ENCODE measurements at regions of chr15 and their contacts with region 1.

Region 1: GRCh38 chr15:52179278-52180195 is 11.7 kb downstream of the GNB5 start:
- DNase-seq: peak; percentile 93
- ATAC-seq: peak; percentile 87
- H3K4me3 Mint-ChIP-seq: peak overlapping the region; percentile 92
- H3K27ac Mint-ChIP-seq: peak overlapping the region; percentile 96
- H3K4me1 Mint-ChIP-seq: peaks cover 35% of the 10 kb centered on the region
- H3K27me3 Mint-ChIP-seq: no peaks in the 10 kb centered on the region

Region 2: GRCh38 chr15:51971375-51972133 is 208.0 kb before region 1 on chr15 and contains the start of gene LEO1:
- CTCF ChIA-PET with region 1: interaction called, 4 read pairs
- POLR2A ChIA-PET with region 1: interaction called, 14 read pairs
- DNase-seq: peak; percentile 95
- ATAC-seq: peak; percentile 88
- H3K4me3 Mint-ChIP-seq: peak within 1 kb of the TSS; percentile 88
- H3K27ac Mint-ChIP-seq: peak within 1 kb of the TSS; percentile 89
- H3K4me1 Mint-ChIP-seq: peaks cover 23% of the 10 kb centered on the region
- H3K27me3 Mint-ChIP-seq: no peaks in the 10 kb centered on the region
- total RNA-seq, gene LEO1: 30.3 to 33.4 TPM

Region 3: DNA sequence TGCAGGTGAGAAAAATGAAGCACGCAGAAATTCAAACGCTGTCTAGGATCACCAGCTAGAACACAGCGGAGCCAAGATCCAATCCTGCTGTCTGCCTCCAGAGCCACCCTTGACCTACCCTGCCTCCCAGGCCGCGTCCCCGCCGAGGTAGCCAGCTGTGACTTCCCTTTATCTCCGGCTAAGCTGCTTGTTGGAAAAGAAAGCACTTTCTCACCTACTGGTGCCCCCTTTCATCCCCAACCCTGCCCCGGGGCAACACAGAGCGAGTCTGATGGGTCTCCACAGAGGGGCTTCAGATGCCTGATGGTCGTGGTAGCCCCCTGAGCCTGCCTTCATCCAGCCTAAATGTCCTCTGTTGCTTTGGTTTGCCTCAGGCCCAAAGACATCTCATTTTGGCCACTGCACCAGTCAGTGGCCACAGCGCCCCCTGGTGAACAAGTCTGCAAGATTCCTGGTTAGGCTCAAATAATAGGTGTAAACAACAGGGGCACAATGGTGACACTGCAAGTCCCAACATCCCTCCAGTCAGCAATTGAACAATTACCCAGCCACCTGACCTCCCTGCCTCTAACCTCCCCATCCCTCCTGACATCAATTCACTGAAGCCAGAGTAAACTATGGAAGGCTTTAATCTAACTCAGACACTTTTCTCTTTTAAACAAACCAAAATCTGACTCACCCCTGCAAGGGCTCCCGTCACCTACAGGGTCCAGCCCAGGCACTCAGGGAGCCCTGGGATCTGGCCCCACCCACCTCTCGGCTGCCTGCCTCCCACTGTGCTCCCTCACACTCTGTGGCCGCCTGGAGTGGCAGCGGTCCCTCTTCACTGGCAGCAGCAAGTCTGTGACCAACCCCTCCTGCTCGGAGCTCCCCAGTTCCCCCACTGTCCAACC is 39.7 kb before region 1 on chr15:
- CTCF ChIA-PET with region 1: interaction called, 15 read pairs
- POLR2A ChIA-PET with region 1: no interaction called
- DNase-seq: peak; percentile 81
- ATAC-seq: peak; percentile 80
- H3K4me3 Mint-ChIP-seq: no peak overlapping the region
- H3K27ac Mint-ChIP-seq: no peak overlapping the region
- H3K4me1 Mint-ChIP-seq: peaks cover 24% of the 10 kb centered on the region
- H3K27me3 Mint-ChIP-seq: no peaks in the 10 kb centered on the region

Region 4: GRCh38 chr15:52163321-52164190 is 16.0 kb before region 1 on chr15:
- CTCF ChIA-PET with region 1: interaction called, 50 read pairs
- POLR2A ChIA-PET with region 1: interaction called, 10 read pairs
- DNase-seq: peak; percentile 29
- ATAC-seq: no peak
- H3K4me3 Mint-ChIP-seq: no peak overlapping the region
- H3K27ac Mint-ChIP-seq: no peak overlapping the region
- H3K4me1 Mint-ChIP-seq: peaks cover 15% of the 10 kb centered on the region
- H3K27me3 Mint-ChIP-seq: no peaks in the 10 kb centered on the region

Region 5: DNA sequence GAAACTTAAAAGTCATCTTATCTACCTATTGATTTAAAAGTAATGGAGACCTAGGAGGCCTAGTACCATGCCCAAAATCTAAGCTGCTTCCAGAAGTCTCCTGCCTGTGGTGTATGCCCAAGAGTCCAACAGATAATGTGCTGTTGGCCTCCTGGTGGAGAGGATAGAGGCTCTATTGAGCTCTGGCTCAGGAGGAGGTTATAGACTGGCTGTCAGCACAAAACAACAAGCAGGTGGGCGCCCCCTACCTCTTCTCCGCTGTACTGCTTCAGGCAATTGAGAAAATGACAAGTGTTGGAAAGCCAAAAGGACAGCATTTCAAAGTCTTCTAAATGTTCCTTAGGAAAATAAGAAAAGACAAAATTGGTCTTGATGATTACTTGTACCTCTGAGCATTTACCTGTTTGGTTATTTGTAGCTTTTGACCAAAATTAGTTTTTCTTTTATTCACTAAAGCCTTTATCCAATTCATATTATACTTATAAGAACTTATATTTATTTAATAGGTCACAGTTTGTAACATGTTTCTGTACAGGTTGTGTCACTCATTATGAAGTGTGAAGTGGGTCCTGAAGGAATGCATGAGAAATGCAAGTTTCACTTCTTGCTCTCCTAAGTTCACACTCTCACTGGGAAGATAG is 28.9 kb after region 1 on chr15:
- CTCF ChIA-PET with region 1: interaction called, 55 read pairs
- POLR2A ChIA-PET with region 1: interaction called, 8 read pairs
- DNase-seq: peak; percentile 86
- ATAC-seq: peak; percentile 98
- H3K4me3 Mint-ChIP-seq: no peak overlapping the region
- H3K27ac Mint-ChIP-seq: no peak overlapping the region
- H3K4me1 Mint-ChIP-seq: peaks cover 11% of the 10 kb centered on the region
- H3K27me3 Mint-ChIP-seq: no peaks in the 10 kb centered on the region

Region 6: DNA sequence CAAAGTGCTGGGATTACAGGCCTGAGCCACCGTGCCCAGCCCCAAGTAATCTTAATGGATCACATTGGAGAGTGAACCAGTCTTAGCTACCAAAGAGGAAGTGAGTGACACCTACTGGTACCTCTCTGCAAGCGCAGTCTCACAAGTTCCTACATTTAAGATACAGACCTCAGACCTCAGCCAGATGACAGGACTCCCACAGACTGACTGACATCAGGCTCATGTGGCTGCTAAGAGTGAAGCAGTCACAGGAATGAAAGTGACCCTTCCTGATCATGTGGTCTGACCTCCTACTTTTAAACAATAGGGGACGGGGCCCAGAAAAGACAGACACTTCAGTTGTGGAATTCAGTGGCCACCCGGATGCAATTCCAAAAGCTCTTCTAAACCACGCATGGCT is 47.9 kb after region 1 on chr15:
- CTCF ChIA-PET with region 1: interaction called, 37 read pairs
- POLR2A ChIA-PET with region 1: interaction called, 8 read pairs
- DNase-seq: peak; percentile 86
- ATAC-seq: peak; percentile 96
- H3K4me3 Mint-ChIP-seq: no peak overlapping the region
- H3K27ac Mint-ChIP-seq: no peak overlapping the region
- H3K4me1 Mint-ChIP-seq: peaks cover 25% of the 10 kb centered on the region
- H3K27me3 Mint-ChIP-seq: no peaks in the 10 kb centered on the region

Region 7: GRCh38 chr15:52308446-52309153 is 129.1 kb after region 1 on chr15:
- CTCF ChIA-PET with region 1: no interaction called
- POLR2A ChIA-PET with region 1: no interaction called
- DNase-seq: no peak
- ATAC-seq: no peak
- H3K4me3 Mint-ChIP-seq: no peak overlapping the region
- H3K27ac Mint-ChIP-seq: no peak overlapping the region
- H3K4me1 Mint-ChIP-seq: peaks cover 6% of the 10 kb centered on the region
- H3K27me3 Mint-ChIP-seq: no peaks in the 10 kb centered on the region

Measured in activated CD8-positive, alpha-beta T cell treated with anti-CD3 and anti-CD28 coated beads, Interleukin-2, amount 10 ng/mL, durations not matched to agents 7 days and 5 days (primary cell).